ENCODE measurements at regions of chr13 and their contacts with region 1.

Region 1: DNA sequence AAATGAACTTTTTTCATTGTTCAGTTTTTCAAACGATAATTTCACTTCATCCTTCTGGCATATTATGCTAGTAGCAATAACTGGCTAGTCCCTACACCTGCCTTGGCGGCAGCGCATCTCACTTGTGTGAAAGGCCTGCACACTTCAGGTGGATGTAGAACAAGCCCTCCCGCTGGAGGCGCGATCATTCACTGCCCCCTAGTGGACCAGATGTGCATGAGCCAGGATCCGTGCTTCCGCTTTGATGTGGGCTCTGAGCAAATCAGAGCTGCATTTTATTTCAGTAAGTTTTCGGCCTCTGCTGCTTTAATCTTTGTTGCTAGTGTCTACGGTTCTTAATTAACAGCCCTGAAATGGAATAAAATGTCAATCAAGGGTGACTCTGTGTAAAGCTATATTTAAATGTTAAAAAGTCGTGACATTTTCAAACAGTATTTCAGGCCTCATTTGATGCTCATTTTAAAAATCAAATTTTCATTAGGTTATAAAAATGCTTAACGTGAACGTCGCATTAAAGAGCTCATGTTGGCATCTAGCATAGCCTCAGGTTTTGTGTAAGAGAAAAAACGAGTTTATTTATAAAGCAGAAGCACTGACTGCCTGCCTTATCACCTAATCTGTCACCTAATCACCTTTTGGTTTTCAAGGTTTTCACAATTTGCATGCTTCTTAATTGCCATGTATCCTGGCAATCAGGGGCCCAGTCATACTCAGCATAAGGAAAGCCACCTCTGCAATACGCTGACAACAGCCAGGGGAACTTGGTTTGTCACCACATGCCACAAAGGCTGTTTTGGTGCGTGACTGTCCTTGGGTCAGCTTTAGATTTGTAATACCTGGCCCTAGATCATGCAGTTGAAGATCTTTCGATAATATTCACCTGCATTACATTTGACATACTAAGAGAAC is 112.2 kb downstream of the TEX26 start:
- DNase-seq: peak; percentile 75 to 79 (median 78)
- H3K4me3 ChIP-seq: no peak overlapping the region
- H3K4me3 Mint-ChIP-seq: peak overlapping the region in 6 of 8 donors; percentile 18 to 71 (median 64)
- H3K27ac ChIP-seq: peak overlapping the region; percentile 39
- H3K27ac Mint-ChIP-seq: peak overlapping the region; percentile 14 to 89 (median 81)
- H3K4me1 ChIP-seq: peaks cover 35% of the 10 kb centered on the region
- H3K4me1 Mint-ChIP-seq: peaks cover 17 to 34% (median 20%) of the 10 kb centered on the region in 4 donors
- H3K27me3 ChIP-seq: no peaks in the 10 kb centered on the region
- H3K27me3 Mint-ChIP-seq: peaks cover 1 to 2% of the 10 kb centered on the region in 2 donors

Region 2: GRCh38 chr13:30802953-30803478 is 241.6 kb before region 1 on chr13:
- CTCF ChIA-PET with region 1: interaction called, 4 read pairs
- POLR2A ChIA-PET with region 1: no interaction called
- intact Hi-C with region 1: loop called (anchors 10 kb)
- DNase-seq: peak; percentile 71 to 78 (median 74)
- H3K4me3 ChIP-seq: no peak overlapping the region
- H3K4me3 Mint-ChIP-seq: peak overlapping the region; percentile 32 to 76 (median 62)
- H3K27ac ChIP-seq: no peak overlapping the region
- H3K27ac Mint-ChIP-seq: peak overlapping the region in 4 of 7 donors; percentile 46 to 70 (median 62)
- H3K4me1 ChIP-seq: peaks cover 9% of the 10 kb centered on the region
- H3K4me1 Mint-ChIP-seq: peaks cover 7 to 21% (median 8%) of the 10 kb centered on the region in 4 donors
- H3K27me3 ChIP-seq: no peaks in the 10 kb centered on the region
- H3K27me3 Mint-ChIP-seq: no peaks in the 10 kb centered on the region

Region 3: DNA sequence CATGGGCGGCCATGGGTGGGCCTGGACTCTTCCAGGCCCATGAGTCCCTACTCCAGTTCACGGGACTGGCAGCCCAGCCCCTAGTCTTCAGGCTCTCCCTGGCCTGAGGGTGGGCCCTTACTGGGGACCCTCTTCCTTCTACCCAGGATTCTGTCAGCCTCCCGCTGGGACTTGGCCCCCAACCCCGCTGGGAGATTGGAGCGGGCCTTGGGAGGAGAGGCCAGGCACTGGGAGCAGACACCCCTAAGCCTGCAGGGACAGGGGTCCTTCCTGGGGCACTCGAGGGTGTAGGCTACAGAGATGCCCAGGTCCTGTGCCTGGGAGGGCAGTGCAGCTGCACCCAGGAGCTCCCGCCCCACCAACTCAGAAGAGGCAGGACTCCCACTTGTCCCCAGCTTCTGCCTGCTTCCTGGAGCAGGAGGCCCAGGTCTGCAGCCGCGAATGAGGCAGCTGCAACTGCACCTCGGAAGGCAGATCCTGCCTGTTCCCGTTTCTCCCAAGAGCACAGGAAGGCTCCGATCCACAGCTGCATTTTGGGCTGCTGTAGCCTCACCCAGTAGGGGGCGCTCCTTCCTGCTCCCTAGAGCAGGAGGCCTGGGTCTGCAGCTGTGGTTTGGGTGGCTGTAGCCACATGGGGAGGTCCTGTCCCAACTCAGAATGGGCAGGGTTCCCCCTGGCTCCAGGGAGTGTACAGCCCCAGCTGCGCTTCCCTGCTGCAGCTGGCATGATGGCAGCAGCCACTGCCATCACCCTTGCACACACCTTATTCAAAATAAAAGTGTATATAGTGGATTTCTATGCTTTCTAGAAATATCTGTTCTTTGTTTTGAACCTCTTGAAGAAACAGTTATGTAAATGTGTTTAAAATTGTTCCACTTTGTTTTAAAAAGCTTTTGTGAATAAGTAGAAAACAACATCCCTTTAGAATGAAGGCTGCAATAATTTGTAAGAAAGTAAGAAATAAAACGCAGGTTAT is 65.4 kb before region 1 on chr13:
- CTCF ChIA-PET with region 1: interaction called, 84 read pairs
- POLR2A ChIA-PET with region 1: no interaction called
- intact Hi-C with region 1: loop called (anchors 1 kb)
- DNase-seq: peak in 4 of 5 donors; percentile 6 to 17 (median 12)
- H3K4me3 ChIP-seq: no peak overlapping the region
- H3K4me3 Mint-ChIP-seq: no peak overlapping the region
- H3K27ac ChIP-seq: no peak overlapping the region
- H3K27ac Mint-ChIP-seq: no peak overlapping the region
- H3K4me1 ChIP-seq: no peaks in the 10 kb centered on the region
- H3K4me1 Mint-ChIP-seq: no peaks in the 10 kb centered on the region
- H3K27me3 ChIP-seq: no peaks in the 10 kb centered on the region
- H3K27me3 Mint-ChIP-seq: peaks cover 3 to 6% of the 10 kb centered on the region in 2 donors

Region 4: DNA sequence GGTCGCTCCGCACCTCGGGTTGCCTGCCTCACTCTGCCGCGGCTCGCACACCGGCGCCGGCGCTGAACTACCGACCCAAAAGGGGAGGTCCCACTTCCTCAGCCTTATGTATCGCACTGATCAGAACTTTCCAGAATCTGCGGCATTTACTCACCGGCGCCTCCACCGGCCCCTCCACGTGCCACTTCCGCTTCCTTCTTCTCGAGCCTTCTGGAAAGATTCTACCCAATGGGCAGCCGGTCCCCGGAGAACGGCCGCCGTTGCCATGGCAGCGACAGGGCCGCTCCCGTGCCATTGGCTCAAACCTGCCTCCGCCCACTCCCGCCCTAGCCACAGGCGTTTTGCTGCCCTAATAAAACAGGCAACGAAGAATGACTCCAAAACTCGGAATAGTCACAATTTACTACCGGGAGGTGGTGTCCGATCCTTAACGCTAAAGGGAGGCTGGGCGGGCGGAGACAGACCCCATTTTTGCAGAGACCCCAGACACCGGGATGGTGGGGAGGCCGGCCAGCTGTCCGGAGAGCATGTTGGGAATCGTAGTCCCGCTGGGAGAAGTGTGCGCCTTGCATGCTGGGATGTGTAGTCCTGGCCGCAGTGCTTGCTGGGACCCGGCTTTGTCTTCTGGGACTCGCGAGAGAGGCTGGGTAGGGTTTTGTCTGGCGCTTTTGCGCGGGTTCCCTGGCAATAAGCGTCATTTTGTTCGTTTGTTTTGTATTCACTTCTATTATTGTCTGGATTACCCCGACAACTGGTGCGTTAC is 117.4 kb after region 1 on chr13 and contains the start of gene HSPH1:
- CTCF ChIA-PET with region 1: no interaction called
- POLR2A ChIA-PET with region 1: no interaction called
- intact Hi-C with region 1: loop called (anchors 2 kb)
- DNase-seq: peak; percentile 99 to 100 (median 100)
- H3K4me3 ChIP-seq: peak within 1 kb of the TSS; percentile 79 to 96
- H3K4me3 Mint-ChIP-seq: peak within 1 kb of the TSS; percentile 96 to 99 (median 98)
- H3K27ac ChIP-seq: peak within 1 kb of the TSS; percentile 95
- H3K27ac Mint-ChIP-seq: peak within 1 kb of the TSS; percentile 97 to 100 (median 99)
- H3K4me1 ChIP-seq: peaks cover 37% of the 10 kb centered on the region
- H3K4me1 Mint-ChIP-seq: peaks cover 23 to 54% (median 29%) of the 10 kb centered on the region in 4 donors
- H3K27me3 ChIP-seq: no peaks in the 10 kb centered on the region
- H3K27me3 Mint-ChIP-seq: no peaks in the 10 kb centered on the region
- total RNA-seq, gene HSPH1: 68.6 to 75.5 TPM